MCF 10A (cell line): ENCODE measurements at regions of chr6 and their contacts with region 1.

Region 1: DNA sequence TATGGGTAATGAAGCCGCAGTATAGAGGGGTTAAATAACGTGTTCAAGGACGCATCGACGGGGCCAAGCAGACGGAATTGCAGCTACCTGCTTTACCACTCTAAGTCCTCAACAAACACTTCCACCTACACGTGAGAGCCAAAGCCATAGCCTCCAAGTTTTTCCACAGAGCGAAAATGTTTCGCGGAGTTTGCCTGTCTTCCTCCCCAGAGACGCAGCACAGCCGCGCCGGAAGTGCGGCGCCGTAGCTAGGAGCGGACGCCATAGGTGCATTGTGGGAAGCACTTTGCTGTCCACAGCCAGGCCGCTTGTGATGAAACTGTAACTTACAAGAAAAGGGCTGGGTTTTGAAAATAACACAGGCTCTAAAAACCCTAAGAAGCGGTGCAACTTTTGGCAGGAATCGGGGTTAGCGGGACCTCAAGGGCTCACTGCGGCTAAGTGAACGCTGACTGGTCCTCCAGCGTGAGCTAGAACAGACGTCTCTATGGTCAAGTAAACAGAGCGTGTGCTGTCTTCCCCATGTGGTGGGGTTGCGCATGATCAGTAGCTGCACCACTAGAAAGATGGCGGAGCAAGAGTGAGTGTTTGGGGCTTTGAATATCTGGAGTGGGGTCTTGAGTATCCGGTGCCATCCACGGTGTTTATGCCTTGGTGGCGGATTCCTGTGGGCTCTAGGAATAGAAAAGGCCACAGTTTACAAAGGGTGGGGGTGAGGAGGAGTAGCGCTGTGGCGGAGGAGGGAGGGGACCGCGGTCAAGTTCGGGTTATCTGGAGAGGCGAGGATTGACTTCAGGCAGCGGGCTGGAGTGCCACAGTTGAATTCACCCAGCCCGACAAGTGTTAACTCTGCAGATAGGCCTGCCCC is at the start of gene RPL7L1:
- DNase-seq: peak; percentile 93
- H3K4me3 Mint-ChIP-seq: peak within 1 kb of the TSS; percentile 98
- H3K27ac Mint-ChIP-seq: peak within 1 kb of the TSS; percentile 100
- H3K4me1 Mint-ChIP-seq: peaks cover 14% of the 10 kb centered on the region
- H3K27me3 Mint-ChIP-seq: no peaks in the 10 kb centered on the region
- CTCF ChIP-seq: no peak
- total RNA-seq, gene RPL7L1: 121 and 123 TPM in 2 replicates

Region 2: DNA sequence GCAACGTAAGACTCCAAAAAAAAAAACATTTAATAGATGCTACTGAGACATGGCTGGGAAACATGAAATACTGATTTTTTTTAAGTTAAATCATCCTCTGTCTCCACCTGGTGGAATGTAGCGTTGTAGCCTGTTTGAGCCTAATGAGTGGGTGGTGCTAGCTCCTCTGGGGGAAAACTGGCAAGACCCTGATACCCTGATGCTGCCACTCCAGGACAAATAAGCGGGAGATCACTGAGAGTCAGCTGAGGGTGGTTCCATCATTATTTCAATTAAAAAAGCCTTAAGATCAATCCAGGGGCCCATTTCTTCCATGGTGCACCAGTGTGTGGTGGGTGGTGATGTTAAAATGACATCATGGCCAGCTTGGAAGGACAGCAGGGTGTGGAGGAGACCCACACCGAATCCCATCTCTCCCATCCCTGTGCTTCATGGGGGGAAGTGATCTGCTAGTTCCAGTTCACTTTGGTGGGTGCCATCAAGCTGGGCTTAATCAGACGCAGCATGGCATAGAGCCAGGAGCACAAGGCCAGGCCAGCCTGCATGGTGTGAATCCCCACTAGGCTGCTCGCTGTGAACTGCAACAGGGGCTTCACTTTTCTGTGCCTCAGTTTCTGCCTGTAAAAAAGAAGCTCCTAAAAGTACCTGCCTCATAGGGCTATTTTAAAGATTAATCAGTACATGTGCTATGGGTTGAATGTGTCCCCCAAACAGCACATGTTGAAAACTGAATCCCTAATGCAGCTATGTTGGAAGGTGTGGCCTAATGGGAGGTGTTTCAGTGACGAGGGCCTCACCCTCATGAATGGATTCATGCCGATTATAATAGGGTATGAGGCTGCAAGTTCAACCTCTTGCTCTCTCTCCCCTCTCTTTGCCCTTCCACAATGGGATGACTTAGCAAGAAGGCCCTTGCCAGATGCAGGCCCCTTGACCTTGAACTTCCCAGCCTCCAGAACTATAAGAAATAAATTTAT is 649.0 kb before region 1 on chr6:
- CTCF ChIA-PET with region 1: no interaction called
- POLR2A ChIA-PET with region 1: interaction called, 3 read pairs
- intact Hi-C with region 1: loop called (anchors 10 kb)
- DNase-seq: peak; percentile 36
- H3K4me3 Mint-ChIP-seq: no peak overlapping the region
- H3K27ac Mint-ChIP-seq: peak overlapping the region; percentile 13
- H3K4me1 Mint-ChIP-seq: peaks cover 39% of the 10 kb centered on the region
- H3K27me3 Mint-ChIP-seq: no peaks in the 10 kb centered on the region
- CTCF ChIP-seq: peak; percentile 43

Region 3: DNA sequence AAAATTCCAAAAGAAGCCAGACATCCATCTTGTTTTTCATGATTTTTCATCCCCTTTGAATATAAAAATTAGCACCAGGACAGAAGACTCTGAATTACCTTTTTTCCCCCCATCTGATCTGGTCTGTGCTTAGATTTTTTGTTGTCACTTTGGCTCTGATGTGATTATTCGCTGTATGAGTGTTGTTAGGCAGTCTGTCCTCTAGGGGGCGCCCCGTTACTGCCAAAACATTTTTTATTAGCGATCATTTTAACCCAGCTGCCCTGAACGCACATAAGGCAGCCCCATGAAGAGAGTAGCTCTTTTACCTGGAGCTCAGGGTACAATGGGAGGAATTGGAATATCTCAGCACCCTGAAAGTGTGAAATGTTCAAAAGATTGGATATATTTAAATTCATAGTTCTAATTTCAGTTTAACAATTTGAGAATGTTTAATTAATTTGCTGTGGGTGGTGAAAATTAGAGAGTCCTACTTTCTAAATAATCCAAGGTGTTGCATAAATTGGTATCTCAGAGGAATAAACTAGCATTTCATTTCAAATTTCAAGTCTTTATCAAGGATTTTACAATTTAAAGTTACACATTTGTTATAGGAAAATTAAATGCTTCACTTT is 218.0 kb before region 1 on chr6:
- CTCF ChIA-PET with region 1: interaction called, 31 read pairs
- POLR2A ChIA-PET with region 1: interaction called, 9 read pairs
- intact Hi-C with region 1: loop called (anchors 1 kb)
- DNase-seq: peak; percentile 82
- H3K4me3 Mint-ChIP-seq: no peak overlapping the region
- H3K27ac Mint-ChIP-seq: no peak overlapping the region
- H3K4me1 Mint-ChIP-seq: no peaks in the 10 kb centered on the region
- H3K27me3 Mint-ChIP-seq: no peaks in the 10 kb centered on the region
- CTCF ChIP-seq: peak; percentile 78

Region 4: GRCh38 chr6:42726485-42727086 is 153.0 kb before region 1 on chr6:
- CTCF ChIA-PET with region 1: interaction called, 9 read pairs
- POLR2A ChIA-PET with region 1: no interaction called
- intact Hi-C with region 1: loop called (anchors 1 kb)
- DNase-seq: peak; percentile 87
- H3K4me3 Mint-ChIP-seq: peak overlapping the region; percentile 11
- H3K27ac Mint-ChIP-seq: no peak overlapping the region
- H3K4me1 Mint-ChIP-seq: no peaks in the 10 kb centered on the region
- H3K27me3 Mint-ChIP-seq: peaks cover 5% of the 10 kb centered on the region
- CTCF ChIP-seq: peak; percentile 74

Region 5: DNA sequence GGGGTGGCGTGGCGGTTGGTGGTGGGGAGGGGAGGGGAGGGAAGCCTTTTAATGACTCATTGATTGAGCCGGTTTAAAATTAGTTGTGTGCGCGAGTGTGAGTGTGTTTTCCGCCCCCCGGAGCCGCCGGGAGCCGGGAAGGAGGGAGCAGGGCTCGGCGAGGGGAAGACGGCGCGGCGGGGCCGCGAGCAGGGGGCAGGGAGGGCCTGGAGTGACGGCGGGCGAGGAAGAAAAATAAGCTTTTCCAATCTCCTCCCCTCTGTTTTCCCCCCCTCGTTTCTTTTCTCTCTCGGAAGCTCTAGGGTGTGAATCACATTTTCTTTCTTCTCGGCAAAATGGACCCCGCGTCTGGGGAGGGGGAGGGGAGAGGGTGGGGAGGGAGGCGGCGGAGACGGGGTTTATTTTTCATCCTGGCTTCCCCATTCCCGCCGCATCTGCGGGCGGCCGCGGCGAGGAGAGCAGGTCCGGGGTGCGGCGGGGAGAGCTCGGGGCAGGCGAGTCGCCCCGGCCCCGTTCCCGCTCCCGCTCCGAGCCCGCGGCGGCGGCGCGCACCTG is 96.9 kb before region 1 on chr6:
- CTCF ChIA-PET with region 1: interaction called, 5 read pairs
- POLR2A ChIA-PET with region 1: interaction called, 66 read pairs
- intact Hi-C with region 1: loop called (anchors 1 kb)
- DNase-seq: peak; percentile 86
- H3K4me3 Mint-ChIP-seq: peak overlapping the region; percentile 73
- H3K27ac Mint-ChIP-seq: peak overlapping the region; percentile 95
- H3K4me1 Mint-ChIP-seq: peaks cover 8% of the 10 kb centered on the region
- H3K27me3 Mint-ChIP-seq: no peaks in the 10 kb centered on the region
- CTCF ChIP-seq: no peak

Region 6: GRCh38 chr6:42805297-42805861 is 74.2 kb before region 1 on chr6:
- CTCF ChIA-PET with region 1: no interaction called
- POLR2A ChIA-PET with region 1: no interaction called
- intact Hi-C with region 1: no loop called
- DNase-seq: no peak
- H3K4me3 Mint-ChIP-seq: no peak overlapping the region
- H3K27ac Mint-ChIP-seq: no peak overlapping the region
- H3K4me1 Mint-ChIP-seq: peaks cover 5% of the 10 kb centered on the region
- H3K27me3 Mint-ChIP-seq: no peaks in the 10 kb centered on the region
- CTCF ChIP-seq: no peak

Region 7: DNA sequence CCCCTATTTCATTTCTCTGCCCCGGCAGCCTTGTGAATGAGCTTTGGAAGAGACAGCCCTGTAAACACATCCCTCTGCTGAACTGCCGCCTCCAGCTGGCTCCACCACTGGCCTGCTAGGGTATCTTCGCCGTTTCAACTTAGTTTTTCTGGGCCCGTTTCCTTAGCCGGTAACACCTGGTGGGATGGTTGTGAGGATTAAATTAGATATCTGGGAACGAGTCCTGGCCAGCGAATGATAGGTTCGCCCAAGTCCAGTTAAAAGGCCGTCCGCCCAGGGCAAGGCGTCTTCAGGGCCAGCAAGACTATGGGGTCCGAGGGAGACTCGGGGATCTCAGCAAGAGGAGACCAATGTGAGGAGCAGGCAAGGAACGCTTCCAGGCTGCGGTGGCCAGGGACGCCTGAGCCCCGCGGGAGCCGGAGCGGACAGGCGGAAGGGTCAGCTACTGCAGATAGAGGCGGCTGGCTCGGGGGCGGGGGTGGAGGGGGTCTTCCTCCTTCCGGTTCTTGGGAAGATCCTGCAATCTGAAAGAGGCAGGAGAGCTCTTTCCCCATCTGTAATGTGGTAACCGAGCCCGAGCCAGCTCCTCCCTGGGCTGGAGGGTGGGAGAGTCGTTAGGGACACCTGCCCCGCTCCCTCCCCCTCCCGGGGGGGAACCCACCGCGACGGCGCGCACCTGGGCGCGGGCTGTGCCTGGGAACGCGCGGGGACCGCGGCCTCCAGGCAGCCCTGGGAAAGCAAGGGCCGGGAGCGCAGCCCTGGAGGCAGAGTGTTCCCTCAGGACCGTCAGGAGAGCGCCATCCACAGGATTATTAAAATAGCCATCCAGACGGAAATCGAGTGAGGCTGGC is 31.8 kb after region 1 on chr6:
- CTCF ChIA-PET with region 1: no interaction called
- POLR2A ChIA-PET with region 1: no interaction called
- intact Hi-C with region 1: no loop called
- DNase-seq: no peak
- H3K4me3 Mint-ChIP-seq: no peak overlapping the region
- H3K27ac Mint-ChIP-seq: no peak overlapping the region
- H3K4me1 Mint-ChIP-seq: no peaks in the 10 kb centered on the region
- H3K27me3 Mint-ChIP-seq: no peaks in the 10 kb centered on the region
- CTCF ChIP-seq: no peak